ENCODE measurements at regions of chr20 and their contacts with region 1.

Region 1: DNA sequence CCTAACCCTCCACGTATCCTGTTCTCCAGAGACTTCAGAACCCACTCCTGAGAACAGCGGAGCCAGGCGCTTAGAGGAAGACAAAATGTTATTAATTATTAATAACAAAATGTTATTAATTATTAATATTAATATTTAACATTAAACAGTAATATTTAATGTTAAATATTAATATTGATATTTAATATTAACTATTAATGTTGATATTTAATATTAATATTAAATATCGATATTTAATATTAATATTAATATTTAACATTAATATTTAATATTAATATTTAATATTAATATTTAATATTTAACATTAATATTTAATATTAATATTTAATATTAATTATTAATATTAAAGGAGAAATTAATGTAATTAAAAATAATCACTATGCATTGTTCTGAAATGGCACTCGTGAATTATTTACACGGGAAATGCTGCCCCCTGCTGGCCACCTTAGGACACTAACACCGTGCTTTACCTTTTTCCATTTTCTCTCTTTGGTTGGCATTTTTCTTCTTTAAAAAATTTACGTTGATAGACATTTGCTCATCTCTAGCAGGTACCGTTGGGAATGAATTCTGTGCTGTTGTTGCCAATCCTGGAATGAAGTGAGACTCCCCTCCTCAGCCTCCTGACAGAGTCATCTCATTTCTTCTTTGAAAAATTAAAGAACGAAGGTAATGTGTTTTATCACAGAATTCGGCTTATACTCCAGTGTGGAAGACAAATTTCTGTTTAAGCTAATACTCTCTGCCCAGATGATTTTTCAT is 7.5 kb upstream of the GGTLC1 start:
- DNase-seq: peak; percentile 28 to 70 (median 52)
- H3K4me3 ChIP-seq: no peak overlapping the region
- H3K27ac ChIP-seq: no peak overlapping the region
- H3K4me1 ChIP-seq: no peaks in the 10 kb centered on the region
- H3K27me3 ChIP-seq: peaks cover 16% of the 10 kb centered on the region
- CTCF ChIP-seq: peak; percentile 30 to 94 (median 69)
- POLR2A ChIP-seq: no peak

Region 2: DNA sequence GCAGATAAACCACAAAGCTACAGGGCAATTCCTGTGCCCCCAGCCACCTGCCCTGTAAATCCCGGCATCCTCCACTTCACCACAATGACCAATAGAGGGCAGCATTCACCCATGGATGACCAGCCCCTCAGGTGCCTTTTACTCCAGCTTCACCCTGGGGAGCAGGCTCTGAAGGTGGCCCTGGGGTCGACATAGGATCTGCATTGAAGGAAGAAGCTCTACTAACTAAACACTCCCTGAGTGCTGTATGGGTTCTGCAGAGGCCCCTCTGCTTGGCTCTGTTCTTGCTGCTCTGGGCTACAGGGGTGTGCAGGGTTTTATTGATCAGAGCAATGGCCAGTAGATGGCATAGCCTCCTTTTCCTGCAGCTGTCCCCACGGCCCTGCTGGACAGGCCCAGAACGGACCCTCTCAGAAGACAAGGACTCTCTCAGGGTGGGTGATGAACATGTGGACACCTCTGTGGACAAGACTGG is 327.6 kb before region 1 on chr20:
- intact Hi-C with region 1: loop called in 1 of 2 experiments (anchors 5 kb)
- DNase-seq: peak; percentile 29 to 80 (median 62)
- H3K4me3 ChIP-seq: no peak overlapping the region
- H3K27ac ChIP-seq: no peak overlapping the region
- H3K4me1 ChIP-seq: no peaks in the 10 kb centered on the region
- H3K27me3 ChIP-seq: no peaks in the 10 kb centered on the region
- CTCF ChIP-seq: peak; percentile 64 to 82 (median 78)
- POLR2A ChIP-seq: no peak

Region 3: GRCh38 chr20:23826541-23827021 is 169.5 kb before region 1 on chr20 and contains the start of gene CST2:
- intact Hi-C with region 1: no loop called
- DNase-seq: no peak
- H3K4me3 ChIP-seq: no peak within 1 kb of the TSS
- H3K27ac ChIP-seq: no peak within 1 kb of the TSS
- H3K4me1 ChIP-seq: no peaks in the 10 kb centered on the region
- H3K27me3 ChIP-seq: no peaks in the 10 kb centered on the region
- CTCF ChIP-seq: no peak
- POLR2A ChIP-seq: no peak
- total RNA-seq, gene CST2: 1.3 to 94.3 (median 20.8) TPM in 6 of 9 donors, not detected in the others

Region 4: GRCh38 chr20:23937303-23938117 is 58.6 kb before region 1 on chr20:
- intact Hi-C with region 1: loop called in 1 of 2 experiments (anchors 10 kb)
- DNase-seq: peak; percentile 51 to 79 (median 60)
- H3K4me3 ChIP-seq: no peak overlapping the region
- H3K27ac ChIP-seq: no peak overlapping the region
- H3K4me1 ChIP-seq: no peaks in the 10 kb centered on the region
- H3K27me3 ChIP-seq: no peaks in the 10 kb centered on the region
- CTCF ChIP-seq: peak; percentile 58 to 83 (median 76)
- POLR2A ChIP-seq: no peak